CD8-positive, alpha-beta T cell (primary cell): ENCODE measurements at regions of chr21 and their contacts with region 1.

Region 1: DNA sequence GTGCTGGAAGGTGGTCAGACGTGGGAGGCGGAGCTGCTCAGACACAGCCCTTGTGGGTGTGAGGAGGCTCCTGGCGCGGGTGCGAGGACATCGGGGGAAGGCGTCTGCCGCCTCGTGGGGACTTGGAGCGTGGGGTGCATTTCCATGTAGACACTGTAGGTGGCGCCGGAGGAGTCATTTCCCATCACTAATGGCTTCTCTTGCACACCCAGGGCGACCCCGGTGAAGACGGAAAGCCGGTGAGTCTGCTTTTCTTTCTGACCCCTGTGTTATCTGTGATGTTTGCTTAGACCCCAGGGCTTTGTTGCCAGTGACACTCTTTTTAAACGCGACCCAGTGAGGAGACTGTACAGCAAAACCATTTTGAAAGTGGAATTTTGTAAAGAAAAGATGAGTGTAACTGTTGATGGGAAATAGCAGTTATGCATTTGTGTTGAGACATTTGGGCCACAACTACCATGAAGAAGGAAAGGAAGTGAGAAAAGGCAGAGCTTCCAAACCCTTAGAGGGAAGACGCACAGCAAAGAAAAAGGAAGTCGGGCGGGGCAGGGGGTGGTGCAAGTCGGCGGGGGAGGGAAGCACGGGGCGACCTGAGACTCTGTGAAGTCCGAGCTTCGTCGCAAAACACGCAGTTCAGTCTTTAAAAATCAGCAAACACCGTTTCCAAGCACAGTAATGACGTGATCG is 64.0 kb downstream of the SLC19A1 start:
- DNase-seq: peak; percentile 64 to 90 (median 83)
- ATAC-seq: peak; percentile 80
- H3K4me3 ChIP-seq: peak overlapping the region; percentile 44 to 47
- H3K4me3 Mint-ChIP-seq: peak overlapping the region; percentile 85
- H3K27ac ChIP-seq: peak overlapping the region; percentile 72 to 74
- H3K27ac Mint-ChIP-seq: peak overlapping the region; percentile 98
- H3K4me1 ChIP-seq: peaks cover 45% of the 10 kb centered on the region
- H3K4me1 Mint-ChIP-seq: peaks cover 33% of the 10 kb centered on the region
- H3K27me3 ChIP-seq: peaks cover 0 to 5% of the 10 kb centered on the region in 2 experiments
- H3K27me3 Mint-ChIP-seq: no peaks in the 10 kb centered on the region
- CTCF ChIP-seq: peak; percentile 93

Region 2: DNA sequence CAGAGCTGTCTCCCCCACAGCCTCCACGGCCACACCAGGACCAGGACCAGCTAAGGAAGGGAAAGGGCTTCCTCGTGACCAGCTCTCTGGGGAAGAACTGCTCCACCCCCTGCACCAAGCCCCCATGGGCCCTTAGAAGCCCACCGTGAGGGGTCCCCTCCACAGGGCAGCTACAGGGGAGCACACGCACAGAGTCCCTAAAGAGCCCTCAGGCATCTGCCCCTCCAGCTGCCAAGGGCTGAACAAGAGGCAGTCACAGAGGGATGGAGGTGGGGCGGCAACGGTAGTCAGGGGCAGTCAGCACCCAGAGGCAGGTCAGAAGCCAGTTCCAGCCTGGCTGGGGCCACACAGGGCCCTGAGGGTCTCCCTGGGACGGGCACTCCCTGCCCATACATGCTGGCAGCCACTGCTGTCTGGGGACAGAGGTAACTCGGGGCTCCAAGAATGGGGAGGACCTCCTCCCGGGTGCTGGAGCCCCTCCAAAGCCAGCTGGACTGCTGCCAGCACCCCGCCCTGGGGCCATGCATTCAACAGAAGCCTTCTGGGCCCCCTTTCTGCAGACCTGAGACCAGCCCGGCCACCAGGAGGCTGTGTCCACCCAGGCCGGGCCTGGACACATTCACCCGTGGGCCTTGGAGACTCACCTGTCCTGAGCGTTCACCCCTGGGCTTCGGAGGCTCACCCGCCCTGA is 45.3 kb after region 1 on chr21:
- CTCF ChIA-PET with region 1: no interaction called
- POLR2A ChIA-PET with region 1: no interaction called
- intact Hi-C with region 1: loop called in 1 of 2 experiments (anchors 5 kb)
- DNase-seq: peak in 1 of 9 experiments; percentile 3
- ATAC-seq: no peak
- H3K4me3 ChIP-seq: no peak overlapping the region
- H3K4me3 Mint-ChIP-seq: no peak overlapping the region
- H3K27ac ChIP-seq: no peak overlapping the region
- H3K27ac Mint-ChIP-seq: no peak overlapping the region
- H3K4me1 ChIP-seq: no peaks in the 10 kb centered on the region
- H3K4me1 Mint-ChIP-seq: no peaks in the 10 kb centered on the region
- H3K27me3 ChIP-seq: no peaks in the 10 kb centered on the region
- H3K27me3 Mint-ChIP-seq: no peaks in the 10 kb centered on the region
- CTCF ChIP-seq: no peak

Region 3: DNA sequence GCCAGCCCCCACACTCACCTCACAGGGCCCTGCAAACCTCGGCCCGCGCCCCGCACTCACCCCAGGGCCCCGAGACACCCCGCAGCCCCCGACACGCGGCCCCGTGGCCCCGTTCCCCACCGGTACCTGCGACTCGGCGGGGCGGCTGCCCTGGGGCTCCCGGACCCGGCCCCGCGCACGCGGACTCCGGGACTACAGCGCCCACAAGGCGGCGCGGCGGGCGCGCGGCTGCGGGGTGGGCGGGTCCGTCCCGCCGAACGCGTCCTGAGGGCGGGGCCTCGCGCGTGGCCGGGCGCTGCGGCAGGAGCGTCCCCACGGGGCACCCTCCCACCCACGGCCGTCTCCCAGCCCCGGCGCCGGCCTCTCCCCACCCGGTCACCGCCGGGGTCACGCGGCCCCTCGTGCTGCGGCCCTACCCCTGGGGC is 64.0 kb after region 1 on chr21 and contains the start of gene SLC19A1:
- CTCF ChIA-PET with region 1: interaction called, 3 read pairs
- POLR2A ChIA-PET with region 1: no interaction called
- intact Hi-C with region 1: loop called (anchors 5 kb)
- DNase-seq: peak; percentile 42 to 87 (median 67)
- ATAC-seq: peak; percentile 86
- H3K4me3 ChIP-seq: peak within 1 kb of the TSS; percentile 45 to 57
- H3K4me3 Mint-ChIP-seq: peak within 1 kb of the TSS; percentile 72
- H3K27ac ChIP-seq: peak within 1 kb of the TSS; percentile 30 to 54
- H3K27ac Mint-ChIP-seq: no peak within 1 kb of the TSS
- H3K4me1 ChIP-seq: peaks cover 17% of the 10 kb centered on the region
- H3K4me1 Mint-ChIP-seq: peaks cover 14% of the 10 kb centered on the region
- H3K27me3 ChIP-seq: no peaks in the 10 kb centered on the region
- H3K27me3 Mint-ChIP-seq: no peaks in the 10 kb centered on the region
- CTCF ChIP-seq: peak; percentile 40
- total RNA-seq, gene SLC19A1: 8.8 to 9.0 TPM

Region 4: DNA sequence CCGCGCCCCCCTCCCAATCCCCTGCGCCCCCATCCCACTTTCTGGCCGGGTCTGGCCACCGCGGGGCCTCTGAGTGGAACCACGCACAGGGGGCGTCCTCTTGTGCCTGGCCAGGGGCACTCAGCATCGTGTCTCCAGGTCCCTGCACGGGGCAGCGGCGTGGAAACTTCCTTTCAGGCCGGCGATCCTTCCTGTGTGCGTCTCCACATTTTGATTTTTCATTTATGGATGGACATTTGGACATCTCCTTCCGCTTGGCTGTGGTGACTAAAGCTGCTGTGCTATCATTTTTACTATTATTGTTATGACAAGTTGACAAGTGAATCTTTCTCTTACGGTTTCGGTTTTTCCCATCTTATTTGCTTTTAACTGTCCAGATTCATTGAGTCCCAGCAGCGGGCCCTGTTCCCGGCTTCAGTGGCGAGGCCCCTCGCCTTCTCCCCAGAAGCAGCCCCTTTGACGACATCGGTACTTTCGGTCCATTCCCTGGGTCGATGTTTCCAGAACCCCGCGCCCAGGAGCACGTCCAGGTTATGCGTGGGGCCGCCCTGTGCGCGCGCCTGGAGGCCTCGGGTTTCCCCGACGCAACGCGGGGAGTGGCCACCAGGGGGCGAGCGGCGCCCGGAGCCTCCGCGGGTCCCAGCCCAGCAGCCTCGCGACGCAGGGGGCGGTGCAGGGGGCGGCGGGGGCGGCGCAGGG is 76.4 kb after region 1 on chr21:
- CTCF ChIA-PET with region 1: no interaction called
- POLR2A ChIA-PET with region 1: no interaction called
- intact Hi-C with region 1: loop called in 1 of 2 experiments (anchors 1 kb)
- DNase-seq: peak; percentile 80 to 97 (median 91)
- ATAC-seq: peak; percentile 90
- H3K4me3 ChIP-seq: peak overlapping the region; percentile 73 to 81
- H3K4me3 Mint-ChIP-seq: peak overlapping the region; percentile 91
- H3K27ac ChIP-seq: peak overlapping the region; percentile 37 to 60
- H3K27ac Mint-ChIP-seq: peak overlapping the region; percentile 91
- H3K4me1 ChIP-seq: peaks cover 38% of the 10 kb centered on the region
- H3K4me1 Mint-ChIP-seq: peaks cover 31% of the 10 kb centered on the region
- H3K27me3 ChIP-seq: no peaks in the 10 kb centered on the region
- H3K27me3 Mint-ChIP-seq: no peaks in the 10 kb centered on the region
- CTCF ChIP-seq: peak; percentile 60

Region 5: GRCh38 chr21:45590246-45590725 is 112.0 kb after region 1 on chr21:
- CTCF ChIA-PET with region 1: interaction called, 33 read pairs
- POLR2A ChIA-PET with region 1: no interaction called
- intact Hi-C with region 1: loop called in 1 of 2 experiments (anchors 1 kb)
- DNase-seq: peak; percentile 44 to 82 (median 71)
- ATAC-seq: peak; percentile 67
- H3K4me3 ChIP-seq: peak overlapping the region; percentile 41 to 44
- H3K4me3 Mint-ChIP-seq: peak overlapping the region; percentile 46
- H3K27ac ChIP-seq: no peak overlapping the region
- H3K27ac Mint-ChIP-seq: no peak overlapping the region
- H3K4me1 ChIP-seq: peaks cover 28% of the 10 kb centered on the region
- H3K4me1 Mint-ChIP-seq: peaks cover 10% of the 10 kb centered on the region
- H3K27me3 ChIP-seq: peaks cover 0 to 16% of the 10 kb centered on the region in 2 experiments
- H3K27me3 Mint-ChIP-seq: peaks cover 3% of the 10 kb centered on the region
- CTCF ChIP-seq: no peak

Region 6: DNA sequence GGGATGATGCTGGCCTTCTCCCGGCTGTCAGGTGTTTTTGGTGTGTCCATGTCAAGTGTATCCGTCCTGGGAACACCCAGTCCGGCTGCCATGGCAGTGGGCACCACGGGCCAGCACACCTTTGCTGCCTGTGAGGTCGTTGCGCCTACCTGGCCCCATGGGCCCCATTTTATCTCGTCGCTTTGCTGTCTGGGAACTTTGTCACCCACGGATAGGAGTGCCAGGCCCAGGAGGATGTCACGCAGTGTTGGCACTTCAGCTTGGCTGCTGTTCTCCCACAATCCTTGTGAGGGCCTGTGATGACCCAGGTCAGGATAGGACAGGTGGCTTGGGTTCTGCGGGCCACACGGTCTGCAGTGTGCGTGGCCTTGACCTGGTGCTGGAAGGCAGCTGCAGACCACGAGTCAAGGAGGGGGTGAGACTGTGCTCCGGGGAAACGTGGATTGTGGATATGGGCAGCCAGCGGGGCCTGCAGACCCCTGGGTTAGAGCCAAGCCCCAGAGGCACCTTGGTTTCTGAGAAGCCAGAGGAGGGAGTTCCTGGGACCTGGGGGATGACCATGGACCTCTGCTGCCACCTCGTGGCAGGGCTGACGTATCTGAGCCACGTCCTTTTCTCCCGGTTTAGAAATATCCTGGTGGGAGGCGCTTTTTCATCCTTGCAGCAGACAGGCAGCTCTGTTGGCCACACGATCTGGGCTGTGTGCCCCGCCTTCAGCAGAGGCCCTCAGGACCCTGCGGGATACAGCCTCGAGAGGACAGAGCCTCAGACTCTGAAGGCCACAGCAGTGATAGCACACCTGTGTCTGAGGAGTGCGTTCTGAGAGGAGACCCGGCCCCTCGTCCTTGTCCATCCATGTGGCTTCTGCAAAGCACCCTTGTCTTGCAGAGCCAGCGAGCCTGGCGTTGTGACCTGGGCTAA is 342.2 kb after region 1 on chr21:
- CTCF ChIA-PET with region 1: interaction called, 8 read pairs
- POLR2A ChIA-PET with region 1: no interaction called
- intact Hi-C with region 1: loop called (anchors 1 kb)
- DNase-seq: peak; percentile 54 to 86 (median 82)
- ATAC-seq: peak; percentile 72
- H3K4me3 ChIP-seq: no peak overlapping the region
- H3K4me3 Mint-ChIP-seq: no peak overlapping the region
- H3K27ac ChIP-seq: no peak overlapping the region
- H3K27ac Mint-ChIP-seq: peak overlapping the region; percentile 21
- H3K4me1 ChIP-seq: peaks cover 3% of the 10 kb centered on the region
- H3K4me1 Mint-ChIP-seq: peaks cover 18% of the 10 kb centered on the region
- H3K27me3 ChIP-seq: no peaks in the 10 kb centered on the region
- H3K27me3 Mint-ChIP-seq: peaks cover 5% of the 10 kb centered on the region
- CTCF ChIP-seq: peak; percentile 80

Region 7: DNA sequence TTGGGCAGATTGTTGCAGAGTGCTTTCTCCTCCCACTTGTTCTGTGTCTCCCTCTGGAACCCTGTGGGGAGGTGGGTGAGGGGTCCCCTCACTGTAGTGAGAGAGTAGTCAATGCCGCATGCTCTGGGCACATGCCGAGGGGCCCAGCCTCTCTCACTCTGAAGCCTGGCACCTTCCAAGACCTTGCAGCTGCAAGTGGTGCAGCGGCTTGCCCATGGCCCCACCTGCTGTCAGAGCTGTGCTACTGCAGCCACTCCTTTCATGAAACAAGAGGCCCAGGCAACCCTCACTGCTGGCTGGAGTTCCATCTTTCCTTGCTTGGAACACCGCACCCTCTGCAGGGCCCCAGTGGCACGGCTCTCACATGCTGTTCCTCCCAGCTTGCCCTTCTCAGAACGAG is 444.9 kb after region 1 on chr21:
- CTCF ChIA-PET with region 1: no interaction called
- POLR2A ChIA-PET with region 1: no interaction called
- intact Hi-C with region 1: loop called in 1 of 2 experiments (anchors 1 kb)
- DNase-seq: peak; percentile 49 to 83 (median 75)
- ATAC-seq: peak; percentile 100
- H3K4me3 ChIP-seq: no peak overlapping the region
- H3K4me3 Mint-ChIP-seq: no peak overlapping the region
- H3K27ac ChIP-seq: no peak overlapping the region
- H3K27ac Mint-ChIP-seq: no peak overlapping the region
- H3K4me1 ChIP-seq: peaks cover 18% of the 10 kb centered on the region
- H3K4me1 Mint-ChIP-seq: peaks cover 19% of the 10 kb centered on the region
- H3K27me3 ChIP-seq: no peaks in the 10 kb centered on the region
- H3K27me3 Mint-ChIP-seq: no peaks in the 10 kb centered on the region
- CTCF ChIP-seq: peak; percentile 84